ENCODE measurements at regions of chr1 and their contacts with region 1.

Region 1: GRCh38 chr1:192477630-192478029 is 97.9 kb upstream of the RGS1 start:
- DNase-seq: peak; percentile 17
- ATAC-seq: peak; percentile 81
- H3K4me3 ChIP-seq: no peak overlapping the region
- H3K27ac ChIP-seq: no peak overlapping the region
- H3K4me1 ChIP-seq: no peaks in the 10 kb centered on the region
- H3K27me3 ChIP-seq: no peaks in the 10 kb centered on the region
- CTCF ChIP-seq: peak; percentile 38 to 76 (median 43); a peak in 5 of 6 replicates
- EP300 ChIP-seq: no peak
- POLR2A ChIP-seq: no peak
- RAD21 ChIP-seq: peak; percentile 94

Region 2: DNA sequence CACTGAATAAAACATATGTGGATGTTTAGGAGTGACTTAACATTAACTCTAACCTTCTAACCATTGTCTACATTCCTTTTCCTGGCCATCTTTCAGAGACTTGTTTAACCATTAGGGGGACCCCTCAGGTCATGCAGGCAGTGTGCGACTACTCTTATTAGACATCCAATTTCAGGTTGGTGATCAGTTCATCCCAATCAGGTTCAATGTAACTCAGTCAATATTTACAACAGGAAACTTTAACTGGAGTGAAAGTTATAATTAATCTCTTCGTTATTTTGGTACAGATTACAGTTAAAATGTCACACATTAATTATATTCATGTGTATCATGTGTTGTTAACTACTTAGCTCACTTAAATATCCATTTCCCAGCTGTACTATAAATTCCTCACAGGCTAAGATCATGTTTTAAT is 29.1 kb after region 1 on chr1:
- CTCF ChIA-PET with region 1: interaction called, 21 read pairs
- POLR2A ChIA-PET with region 1: no interaction called
- RAD21 ChIA-PET with region 1: interaction called, 20 read pairs
- SMC1A ChIA-PET with region 1: interaction called, 11 read pairs
- in situ Hi-C with region 1: loop called (anchors 5 kb)
- intact Hi-C with region 1: no loop called
- DNase-seq: peak; percentile 66
- ATAC-seq: peak; percentile 99
- H3K4me3 ChIP-seq: no peak overlapping the region
- H3K27ac ChIP-seq: no peak overlapping the region
- H3K4me1 ChIP-seq: no peaks in the 10 kb centered on the region; the same call in 1 of the 2 replicates
- H3K27me3 ChIP-seq: no peaks in the 10 kb centered on the region
- CTCF ChIP-seq: peak; percentile 69 to 93 (median 70); a peak in 5 of 6 replicates
- EP300 ChIP-seq: no peak
- POLR2A ChIP-seq: no peak
- RAD21 ChIP-seq: peak; percentile 98

Region 3: DNA sequence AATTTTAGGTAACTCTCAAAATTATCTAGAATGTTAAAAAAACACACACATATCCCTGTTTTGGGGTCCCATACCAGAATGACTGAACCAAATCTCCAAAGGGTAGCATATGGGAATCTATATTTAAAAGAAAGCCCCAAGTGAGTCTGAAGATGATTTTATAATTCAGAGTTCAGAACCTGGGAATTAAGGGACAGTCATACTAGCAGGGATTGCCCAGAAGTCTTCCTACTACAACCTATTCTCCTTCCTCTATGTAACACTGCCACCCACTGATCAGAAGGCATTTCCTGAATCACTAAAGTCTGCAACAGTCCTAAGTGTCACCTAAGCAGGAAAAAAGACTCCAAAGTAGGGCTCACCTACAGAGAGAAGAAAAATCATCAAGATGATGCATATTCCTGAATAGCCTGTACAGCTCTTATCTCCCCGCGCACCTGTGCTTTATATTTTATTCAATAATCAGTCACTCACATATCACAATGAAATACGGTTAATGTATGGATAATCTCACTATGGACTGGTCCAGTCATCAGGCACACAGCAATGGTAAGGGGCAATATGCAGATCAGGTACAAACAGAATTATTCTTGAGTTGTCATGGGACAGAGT is 102.8 kb after region 1 on chr1:
- CTCF ChIA-PET with region 1: interaction called, 16 read pairs
- POLR2A ChIA-PET with region 1: no interaction called
- RAD21 ChIA-PET with region 1: interaction called, 12 read pairs
- SMC1A ChIA-PET with region 1: interaction called, 15 read pairs
- in situ Hi-C with region 1: no loop called
- intact Hi-C with region 1: loop called (anchors 1 kb)
- DNase-seq: peak; percentile 81
- ATAC-seq: peak; percentile 33
- H3K4me3 ChIP-seq: peak overlapping the region; percentile 31; the same call in 1 of the 2 replicates
- H3K27ac ChIP-seq: no peak overlapping the region
- H3K4me1 ChIP-seq: no peaks in the 10 kb centered on the region
- H3K27me3 ChIP-seq: no peaks in the 10 kb centered on the region
- CTCF ChIP-seq: peak; percentile 29 to 70 (median 55); a peak in 5 of 6 replicates
- EP300 ChIP-seq: peak in 1 of 2 experiments; percentile 60; a peak in 2 of 4 replicates
- POLR2A ChIP-seq: peak; percentile 70; the same call in 1 of the 2 replicates
- RAD21 ChIP-seq: peak; percentile 95

Region 4: GRCh38 chr1:192626366-192627179 is 148.9 kb after region 1 on chr1:
- CTCF ChIA-PET with region 1: interaction called, 16 read pairs
- POLR2A ChIA-PET with region 1: no interaction called
- RAD21 ChIA-PET with region 1: interaction called, 9 read pairs
- SMC1A ChIA-PET with region 1: interaction called, 13 read pairs
- in situ Hi-C with region 1: no loop called
- intact Hi-C with region 1: no loop called
- DNase-seq: peak; percentile 66
- ATAC-seq: peak; percentile 84
- H3K4me3 ChIP-seq: no peak overlapping the region
- H3K27ac ChIP-seq: no peak overlapping the region
- H3K4me1 ChIP-seq: no peaks in the 10 kb centered on the region
- H3K27me3 ChIP-seq: no peaks in the 10 kb centered on the region
- CTCF ChIP-seq: no peak
- EP300 ChIP-seq: peak in 1 of 2 experiments; percentile 67; a peak in 1 of 4 replicates
- POLR2A ChIP-seq: no peak
- RAD21 ChIP-seq: no peak

Region 5: DNA sequence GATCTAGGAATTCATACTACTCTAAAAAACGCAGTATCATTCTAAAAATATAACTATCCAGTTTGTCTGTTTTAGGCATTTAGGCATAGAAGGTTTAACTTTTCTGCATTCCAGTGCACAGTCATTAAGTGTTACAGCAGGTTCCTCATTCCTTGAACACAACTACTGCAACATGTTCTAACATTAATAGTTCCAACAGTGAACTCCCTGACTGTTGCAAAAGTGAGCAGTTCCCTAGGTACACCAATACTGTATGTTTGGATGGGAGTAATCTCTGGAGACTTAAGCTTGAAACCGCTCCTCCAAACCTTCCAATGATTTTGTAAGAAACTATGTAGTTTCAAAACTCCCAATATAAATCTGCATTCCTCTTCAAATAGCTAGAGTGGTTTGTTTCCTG is 535.4 kb after region 1 on chr1:
- CTCF ChIA-PET with region 1: interaction called, 156 read pairs
- POLR2A ChIA-PET with region 1: no interaction called
- RAD21 ChIA-PET with region 1: interaction called, 37 read pairs
- SMC1A ChIA-PET with region 1: interaction called, 45 read pairs
- in situ Hi-C with region 1: loop called (anchors 5 kb)
- intact Hi-C with region 1: loop called (anchors 2 kb)
- DNase-seq: no peak
- ATAC-seq: no peak
- H3K4me3 ChIP-seq: no peak overlapping the region
- H3K27ac ChIP-seq: no peak overlapping the region
- H3K4me1 ChIP-seq: no peaks in the 10 kb centered on the region
- H3K27me3 ChIP-seq: no peaks in the 10 kb centered on the region
- CTCF ChIP-seq: no peak
- EP300 ChIP-seq: no peak
- POLR2A ChIP-seq: no peak
- RAD21 ChIP-seq: no peak

Region 6: DNA sequence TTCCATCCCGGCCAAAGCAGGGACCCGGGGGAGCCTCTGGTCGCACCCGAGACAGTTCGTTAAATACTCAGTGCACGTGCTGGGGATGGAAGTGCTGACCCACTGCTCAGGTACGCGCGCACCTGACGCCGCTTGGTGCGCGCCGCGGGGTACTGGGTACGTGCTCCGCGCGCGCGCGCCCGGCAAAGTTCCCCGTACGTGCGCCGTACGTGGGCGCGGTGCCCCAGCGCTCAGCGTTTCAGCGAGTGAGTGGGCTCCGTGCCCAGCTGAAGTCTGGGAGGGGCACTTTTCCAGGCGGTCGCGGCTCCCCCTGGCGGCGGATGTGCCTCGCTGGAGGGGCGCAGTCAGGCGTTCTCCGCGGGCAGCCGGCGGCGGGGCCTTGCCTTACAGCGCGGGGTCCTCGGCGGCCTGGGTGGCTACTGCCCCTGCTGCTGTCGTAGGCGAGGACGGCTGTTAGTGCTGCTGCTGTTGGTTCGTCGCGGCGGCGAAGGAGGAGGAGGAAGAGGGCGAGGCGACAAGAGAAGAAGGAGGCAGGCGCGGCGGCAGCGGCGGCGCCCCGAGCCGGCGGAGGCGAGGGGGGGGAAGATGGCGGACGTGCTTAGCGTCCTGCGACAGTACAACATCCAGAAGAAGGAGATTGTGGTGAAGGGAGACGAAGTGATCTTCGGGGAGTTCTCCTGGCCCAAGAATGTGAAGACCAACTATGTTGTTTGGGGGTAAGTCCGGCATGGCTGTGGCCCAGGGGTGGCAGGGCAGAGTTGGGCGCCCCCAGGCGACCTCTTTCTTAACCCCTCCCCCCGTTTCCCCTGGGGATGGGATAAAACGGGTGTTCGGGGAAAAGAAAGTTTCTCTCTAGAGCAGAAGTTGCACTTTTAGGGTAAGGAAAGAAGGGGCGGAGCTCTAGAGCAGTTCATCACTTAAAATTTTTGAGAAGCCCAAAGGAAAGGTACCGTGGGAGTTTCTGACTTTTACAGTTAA is 644.3 kb after region 1 on chr1 and contains the start of gene CDC73:
- CTCF ChIA-PET with region 1: interaction called, 9 read pairs
- POLR2A ChIA-PET with region 1: no interaction called
- RAD21 ChIA-PET with region 1: interaction called, 6 read pairs
- SMC1A ChIA-PET with region 1: interaction called, 10 read pairs
- in situ Hi-C with region 1: no loop called
- intact Hi-C with region 1: loop called (anchors 2 kb)
- DNase-seq: peak; percentile 89
- ATAC-seq: peak; percentile 93
- H3K4me3 ChIP-seq: peak within 1 kb of the TSS; percentile 91
- H3K27ac ChIP-seq: peak within 1 kb of the TSS; percentile 92
- H3K4me1 ChIP-seq: no peaks in the 10 kb centered on the region; the same call in 1 of the 2 replicates
- H3K27me3 ChIP-seq: no peaks in the 10 kb centered on the region
- CTCF ChIP-seq: peak; percentile 87 to 96 (median 88)
- EP300 ChIP-seq: peak in 1 of 2 experiments; percentile 25; a peak in 1 of 4 replicates
- POLR2A ChIP-seq: peak; percentile 97
- RAD21 ChIP-seq: peak; percentile 74
- polyA plus RNA-seq, gene CDC73: 21.0 to 21.3 TPM